ENCODE measurements at regions of chrX and their contacts with region 1.

Region 1: GRCh38 chrX:13087322-13088155 is 43.1 kb upstream of the FAM9C start:
- DNase-seq: peak in 9 of 10 donors; percentile 42 to 93 (median 78)
- ATAC-seq: peak; percentile 69 to 76
- H3K4me3 Mint-ChIP-seq: peak overlapping the region; percentile 57 to 89 (median 84)
- H3K27ac Mint-ChIP-seq: peak overlapping the region; percentile 93 to 100 (median 98)
- H3K4me1 Mint-ChIP-seq: peaks cover 16 to 93% (median 81%) of the 10 kb centered on the region in 4 donors
- H3K27me3 Mint-ChIP-seq: no peaks in the 10 kb centered on the region

Region 2: GRCh38 chrX:12955882-12956703 is 131.4 kb before region 1 on chrX:
- POLR2A ChIA-PET with region 1: interaction called, 238 read pairs
- DNase-seq: peak in 7 of 10 donors; percentile 30 to 78 (median 55)
- ATAC-seq: peak; percentile 5 to 49
- H3K4me3 Mint-ChIP-seq: peak overlapping the region; percentile 72 to 90 (median 88)
- H3K27ac Mint-ChIP-seq: peak overlapping the region; percentile 94 to 99 (median 97)
- H3K4me1 Mint-ChIP-seq: peaks cover 17 to 82% (median 68%) of the 10 kb centered on the region in 4 donors
- H3K27me3 Mint-ChIP-seq: no peaks in the 10 kb centered on the region

Region 3: GRCh38 chrX:12984629-12985319 is 102.8 kb before region 1 on chrX:
- POLR2A ChIA-PET with region 1: interaction called, 1,055 read pairs
- DNase-seq: peak in 7 of 10 donors; percentile 33 to 70 (median 61)
- ATAC-seq: peak; percentile 71 to 74
- H3K4me3 Mint-ChIP-seq: peak overlapping the region; percentile 51 to 84 (median 73)
- H3K27ac Mint-ChIP-seq: peak overlapping the region; percentile 93 to 100 (median 98)
- H3K4me1 Mint-ChIP-seq: peaks cover 23 to 80% (median 62%) of the 10 kb centered on the region in 4 donors
- H3K27me3 Mint-ChIP-seq: no peaks in the 10 kb centered on the region

Region 4: DNA sequence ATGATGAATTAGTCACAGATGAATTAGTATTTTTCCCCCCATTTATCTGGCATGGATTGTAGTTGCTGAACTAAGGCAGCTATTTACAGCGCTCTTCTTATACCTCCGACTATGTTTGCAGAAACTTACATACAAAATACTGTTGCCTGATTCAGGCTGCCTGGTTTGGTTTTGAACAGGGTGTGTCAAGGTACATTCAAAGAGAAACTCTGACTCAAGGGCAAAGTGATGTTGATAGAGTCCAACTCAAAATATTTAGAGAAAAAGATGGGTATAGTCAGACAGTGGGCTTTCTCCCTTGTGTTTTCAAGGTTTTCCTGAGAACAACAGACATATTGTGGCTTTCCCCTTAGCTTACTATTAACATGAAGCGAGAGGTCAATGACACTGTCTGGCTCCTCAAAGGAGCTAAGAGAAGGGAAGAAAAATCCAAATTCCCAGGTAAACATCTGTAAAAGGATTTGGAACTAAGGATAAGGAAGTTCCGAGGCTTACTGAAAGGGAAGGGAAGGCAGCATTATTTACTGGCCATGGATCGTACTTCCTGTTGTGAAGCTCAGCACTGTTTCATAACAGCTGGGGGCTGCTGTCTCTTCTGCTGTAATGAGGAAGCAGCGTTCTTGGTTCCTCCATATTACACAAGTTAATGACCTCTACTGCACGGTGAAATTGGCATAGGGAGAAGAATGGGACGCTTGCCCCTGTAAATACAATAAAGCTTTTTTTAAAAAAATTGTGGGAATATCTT is 74.0 kb before region 1 on chrX:
- POLR2A ChIA-PET with region 1: interaction called, 218 read pairs
- DNase-seq: peak in 2 of 10 donors; percentile 26 to 34
- ATAC-seq: peak; percentile 82 to 84
- H3K4me3 Mint-ChIP-seq: peak overlapping the region; percentile 1 to 71 (median 56)
- H3K27ac Mint-ChIP-seq: peak overlapping the region; percentile 35 to 99 (median 89)
- H3K4me1 Mint-ChIP-seq: peaks cover 10 to 70% (median 60%) of the 10 kb centered on the region in 4 donors
- H3K27me3 Mint-ChIP-seq: no peaks in the 10 kb centered on the region

Region 5: DNA sequence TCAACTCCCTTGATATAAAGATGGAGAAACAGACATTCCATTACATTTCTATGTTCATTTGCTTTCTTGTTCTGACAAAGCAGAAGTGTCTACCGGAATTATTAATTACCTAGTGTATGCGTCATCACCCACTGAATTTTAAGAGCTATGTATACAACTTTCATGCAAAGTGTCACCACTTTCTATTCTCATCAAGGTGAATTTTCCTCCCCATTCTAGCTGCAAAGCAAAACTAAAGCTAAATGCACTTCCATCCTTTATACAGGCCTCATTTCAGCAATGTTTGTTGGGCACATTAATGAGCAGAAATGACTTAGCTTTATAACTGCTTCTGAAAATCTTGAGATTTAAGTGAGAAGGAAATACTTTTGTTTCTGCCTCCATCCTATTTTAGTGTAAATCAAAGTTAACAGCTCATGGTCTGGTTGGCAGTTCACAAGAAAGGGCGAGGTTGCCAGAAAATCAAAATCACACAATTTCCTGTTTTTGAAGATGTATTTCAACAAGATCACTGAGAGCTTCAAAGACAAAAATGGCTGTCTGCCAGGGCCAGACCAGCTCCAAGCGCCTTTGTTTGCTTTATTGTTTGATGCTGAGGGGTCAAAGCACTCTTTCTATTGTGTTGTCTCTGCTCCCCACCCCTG is 35.9 kb before region 1 on chrX:
- POLR2A ChIA-PET with region 1: interaction called, 158 read pairs
- DNase-seq: peak; percentile 21 to 83 (median 58)
- ATAC-seq: peak; percentile 77 to 84
- H3K4me3 Mint-ChIP-seq: peak overlapping the region; percentile 14 to 72 (median 56)
- H3K27ac Mint-ChIP-seq: peak overlapping the region; percentile 90 to 98 (median 94)
- H3K4me1 Mint-ChIP-seq: peaks cover 16 to 84% (median 74%) of the 10 kb centered on the region in 4 donors
- H3K27me3 Mint-ChIP-seq: no peaks in the 10 kb centered on the region

Region 6: DNA sequence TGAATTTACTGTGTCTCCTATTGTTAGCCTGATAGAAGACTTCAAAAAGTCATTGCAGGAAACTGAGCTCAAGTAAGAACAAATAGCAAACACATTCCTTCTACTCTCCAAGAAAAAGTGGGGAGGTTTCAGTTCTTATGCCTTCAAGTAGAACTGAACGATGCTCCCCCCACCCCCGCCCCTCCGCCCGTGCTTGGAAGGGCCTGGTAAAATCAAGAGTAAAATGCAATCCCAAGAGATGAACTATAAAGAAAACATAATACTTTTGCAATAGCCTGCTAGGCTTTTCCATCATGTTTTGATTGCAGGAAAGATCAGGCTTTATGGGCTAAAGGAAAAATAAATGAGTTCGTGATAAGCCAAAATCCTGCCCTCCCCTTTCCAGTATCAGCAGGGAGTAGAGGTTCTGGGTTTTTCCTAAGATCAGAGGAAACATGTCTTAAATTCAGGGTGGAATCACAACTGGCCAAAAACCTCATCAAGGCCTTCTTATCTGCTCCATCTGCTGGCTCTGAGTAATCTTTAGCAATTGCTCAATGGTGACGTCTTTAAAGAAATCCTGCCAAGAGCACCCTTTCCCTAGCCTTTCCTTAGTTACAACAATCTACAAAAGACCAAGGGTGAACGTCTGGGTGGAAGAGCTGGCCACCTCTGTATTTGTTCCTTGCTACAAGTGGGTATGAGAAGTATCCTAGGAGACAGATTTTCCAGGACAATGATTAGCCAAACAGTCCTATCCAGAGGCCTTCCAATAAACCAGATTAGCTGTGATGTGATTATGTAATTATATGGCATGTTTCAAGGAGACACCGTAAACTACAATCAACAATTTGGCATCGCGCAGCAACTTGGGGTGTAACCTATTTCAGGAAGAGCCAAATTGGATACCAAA is 23.1 kb after region 1 on chrX:
- POLR2A ChIA-PET with region 1: no interaction called
- DNase-seq: no peak
- ATAC-seq: no peak
- H3K4me3 Mint-ChIP-seq: no peak overlapping the region
- H3K27ac Mint-ChIP-seq: no peak overlapping the region
- H3K4me1 Mint-ChIP-seq: peaks cover 0 to 2% (median 0%) of the 10 kb centered on the region in 4 donors
- H3K27me3 Mint-ChIP-seq: no peaks in the 10 kb centered on the region